ENCODE measurements at regions of chr3 and their contacts with region 1.

Region 1: DNA sequence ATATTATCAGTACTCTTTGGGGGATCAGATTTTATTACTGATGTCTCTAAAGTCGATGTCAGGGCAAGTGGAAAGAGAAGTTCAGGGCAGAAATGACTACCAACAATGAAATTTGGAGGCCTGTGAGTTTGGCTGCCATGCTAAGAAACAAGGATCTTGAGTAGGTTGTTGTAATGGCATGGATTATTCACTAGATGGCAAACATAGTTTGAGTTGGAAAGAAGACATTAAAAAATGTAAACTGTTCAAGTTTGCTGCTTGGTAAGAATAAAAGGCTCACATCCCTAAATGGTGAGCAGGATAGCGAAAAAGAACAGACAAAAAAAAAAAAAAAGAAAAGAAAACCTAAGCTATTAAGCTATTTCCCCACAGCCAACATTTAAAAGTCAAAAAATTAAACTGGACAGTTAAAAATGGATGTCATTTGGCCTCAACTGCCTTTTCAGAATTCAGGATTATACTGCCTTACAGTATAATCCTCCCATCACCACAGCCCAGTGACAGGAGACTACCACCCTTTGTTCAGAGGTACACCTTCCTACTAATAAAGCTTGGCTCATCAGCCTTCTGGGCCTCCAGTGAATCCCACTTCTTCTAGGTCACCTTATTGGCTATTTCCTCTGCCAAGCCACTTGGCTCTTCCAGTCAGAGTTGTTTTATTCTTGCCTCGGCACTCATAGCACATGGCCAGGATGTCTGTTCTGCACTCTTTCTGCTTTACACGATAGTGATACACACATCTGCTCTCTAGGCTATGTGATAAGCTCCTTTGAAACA is 163.7 kb downstream of the PLD1 start:
- DNase-seq: peak; percentile 36
- ATAC-seq: peak; percentile 49; the same call in 1 of the 2 replicates
- H3K4me3 ChIP-seq: no peak overlapping the region
- H3K27ac ChIP-seq: no peak overlapping the region
- H3K4me1 ChIP-seq: no peaks in the 10 kb centered on the region
- H3K27me3 ChIP-seq: no peaks in the 10 kb centered on the region
- CTCF ChIP-seq: peak; percentile 45 to 69 (median 58)
- POLR2A ChIP-seq: no peak
- RAD21 ChIP-seq: peak; percentile 79

Region 2: DNA sequence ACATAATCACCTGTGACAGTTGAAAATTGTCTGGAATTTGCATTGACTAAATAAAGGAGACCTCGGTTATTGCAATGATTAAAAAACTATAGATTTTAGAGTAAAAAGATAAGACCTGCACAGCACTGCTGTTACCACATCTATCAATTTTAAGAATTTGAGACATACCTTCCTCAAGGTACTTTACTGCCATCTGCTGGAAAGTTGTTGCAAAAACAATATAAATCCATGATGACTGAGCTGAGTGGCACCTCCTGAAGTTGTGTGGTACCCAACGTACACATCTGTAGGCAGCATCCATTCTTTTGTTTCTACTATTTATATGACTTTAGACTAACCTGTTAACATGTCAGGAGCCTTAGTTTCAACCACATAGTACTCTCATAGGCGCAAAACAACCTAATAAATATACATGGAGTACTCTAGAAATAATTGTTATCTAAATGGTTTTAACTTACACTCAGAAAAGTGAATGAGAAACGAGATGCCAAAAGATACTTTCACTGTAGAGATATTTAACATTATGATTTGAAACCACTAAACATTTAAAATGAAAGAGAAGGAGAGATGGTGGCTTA is 695.0 kb after region 1 on chr3:
- CTCF ChIA-PET with region 1: no interaction called
- POLR2A ChIA-PET with region 1: no interaction called
- RAD21 ChIA-PET with region 1: no interaction called
- intact Hi-C with region 1: loop called (anchors 5 kb)
- DNase-seq: peak; percentile 48
- ATAC-seq: peak; percentile 80
- H3K4me3 ChIP-seq: no peak overlapping the region
- H3K27ac ChIP-seq: no peak overlapping the region
- H3K4me1 ChIP-seq: no peaks in the 10 kb centered on the region
- H3K27me3 ChIP-seq: no peaks in the 10 kb centered on the region
- CTCF ChIP-seq: peak; percentile 50 to 67 (median 57); a peak in 5 of 6 replicates
- POLR2A ChIP-seq: no peak
- RAD21 ChIP-seq: peak; percentile 77

Region 3: DNA sequence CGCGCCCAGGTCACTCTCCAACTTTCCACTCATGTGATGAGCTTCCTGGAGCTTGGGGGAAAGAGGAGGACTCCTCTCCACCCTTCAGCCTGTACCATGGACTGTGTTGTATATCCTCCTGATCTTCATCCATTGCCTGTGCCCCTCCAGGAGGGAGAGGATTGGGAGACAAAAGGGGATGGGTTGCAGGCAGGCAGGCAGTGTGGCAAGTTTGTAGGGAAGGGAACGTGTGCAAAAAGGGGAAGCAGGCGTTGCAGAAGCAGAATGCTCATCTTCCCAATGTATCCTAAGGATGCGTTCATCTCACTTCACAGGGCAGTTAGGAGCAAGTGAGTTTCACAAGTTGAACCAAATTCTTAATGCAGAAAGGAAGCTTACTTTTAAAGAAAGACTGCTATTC is 829.8 kb after region 1 on chr3:
- CTCF ChIA-PET with region 1: no interaction called
- POLR2A ChIA-PET with region 1: no interaction called
- RAD21 ChIA-PET with region 1: no interaction called
- intact Hi-C with region 1: loop called (anchors 5 kb)
- DNase-seq: no peak
- ATAC-seq: no peak
- H3K4me3 ChIP-seq: peak overlapping the region in 1 of 2 experiments; percentile 67; a peak in 1 of 4 replicates
- H3K27ac ChIP-seq: no peak overlapping the region
- H3K4me1 ChIP-seq: peaks cover 6 to 14% of the 10 kb centered on the region in 2 experiments; a peak in 3 of 4 replicates
- H3K27me3 ChIP-seq: no peaks in the 10 kb centered on the region
- CTCF ChIP-seq: no peak
- POLR2A ChIP-seq: no peak
- RAD21 ChIP-seq: no peak

Region 4: GRCh38 chr3:172666873-172667694 is 1020.5 kb after region 1 on chr3:
- CTCF ChIA-PET with region 1: no interaction called
- POLR2A ChIA-PET with region 1: no interaction called
- RAD21 ChIA-PET with region 1: no interaction called
- intact Hi-C with region 1: loop called (anchors 10 kb)
- DNase-seq: peak; percentile 67
- ATAC-seq: peak; percentile 100
- H3K4me3 ChIP-seq: no peak overlapping the region
- H3K27ac ChIP-seq: no peak overlapping the region
- H3K4me1 ChIP-seq: peaks cover 0 to 9% of the 10 kb centered on the region in 2 experiments; a peak in 1 of 4 replicates
- H3K27me3 ChIP-seq: no peaks in the 10 kb centered on the region
- CTCF ChIP-seq: peak; percentile 79 to 90 (median 85)
- POLR2A ChIP-seq: no peak
- RAD21 ChIP-seq: peak; percentile 94

Measured in HCT116 (cell line).